ENCODE measurements at regions of chr16 and their contacts with region 1.

Region 1: DNA sequence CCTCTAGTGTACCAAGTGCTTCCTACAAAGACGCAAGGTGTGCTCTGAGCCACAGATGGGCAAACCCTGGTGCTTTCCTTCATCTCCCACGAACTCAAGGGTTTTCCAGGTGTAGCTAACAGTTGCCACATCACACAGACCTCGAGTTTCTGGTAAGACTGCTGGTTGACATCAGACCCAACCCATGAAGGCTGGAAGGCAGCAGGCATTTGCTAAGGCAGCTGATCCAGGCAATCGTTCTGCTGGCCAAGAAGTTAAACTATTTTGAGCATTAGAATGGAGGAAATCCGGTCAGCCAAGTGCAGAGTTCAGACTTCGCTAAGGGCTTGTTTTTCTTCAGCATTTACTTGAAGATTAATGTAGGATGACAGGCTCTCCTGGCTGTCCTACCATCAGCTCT is 11.5 kb downstream of the HAS3 start:
- DNase-seq: peak in 1 of 5 donors; percentile 6
- H3K4me3 ChIP-seq: no peak overlapping the region
- H3K27ac ChIP-seq: no peak overlapping the region
- H3K4me1 ChIP-seq: no peaks in the 10 kb centered on the region
- H3K27me3 ChIP-seq: no peaks in the 10 kb centered on the region
- CTCF ChIP-seq: no peak
- EP300 ChIP-seq: no peak
- POLR2A ChIP-seq: no peak

Region 2: DNA sequence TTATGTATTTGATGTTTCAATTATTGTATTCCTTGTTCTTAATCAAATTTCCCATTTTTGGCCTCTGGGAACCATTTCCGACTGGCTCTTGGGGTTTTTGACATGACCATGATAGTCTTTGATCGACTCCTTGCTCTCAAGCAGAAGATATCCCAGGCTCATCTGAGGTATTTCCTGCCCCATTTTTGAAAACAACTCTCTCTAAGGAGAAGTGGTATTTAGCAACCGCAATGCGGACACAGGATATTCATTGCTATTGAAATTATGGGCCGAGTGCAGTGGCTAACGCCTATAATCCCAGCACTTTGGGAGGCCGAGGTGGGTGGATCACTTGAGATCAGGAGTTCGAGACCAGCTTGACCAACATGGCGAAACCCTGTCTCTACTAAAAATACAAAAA is 268.1 kb before region 1 on chr16:
- intact Hi-C with region 1: loop called in 3 of 4 experiments (anchors 5 to 10 kb)
- DNase-seq: no peak
- H3K4me3 ChIP-seq: no peak overlapping the region
- H3K27ac ChIP-seq: no peak overlapping the region
- H3K4me1 ChIP-seq: peaks cover 1% of the 10 kb centered on the region
- H3K27me3 ChIP-seq: no peaks in the 10 kb centered on the region
- CTCF ChIP-seq: no peak
- EP300 ChIP-seq: no peak
- POLR2A ChIP-seq: no peak

Region 3: DNA sequence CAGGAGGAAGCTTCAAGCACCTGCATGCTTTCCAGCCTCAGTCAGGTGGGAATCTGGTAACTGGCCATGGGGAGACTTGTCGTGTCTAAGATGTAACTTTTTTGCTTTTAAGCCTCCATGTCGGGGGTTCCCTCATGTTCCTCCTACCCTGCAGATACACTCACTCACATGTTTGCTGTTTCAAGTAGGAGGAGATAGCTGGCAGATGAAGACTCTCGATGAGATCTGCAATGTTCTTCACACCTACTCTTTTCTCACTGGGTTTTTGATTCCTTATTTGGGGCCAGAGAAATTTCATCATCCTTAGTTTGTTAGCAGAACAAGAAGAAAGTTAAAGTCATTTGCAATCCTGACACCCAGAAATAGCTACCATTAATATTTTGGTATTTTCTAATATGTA is 40.3 kb after region 1 on chr16:
- intact Hi-C with region 1: no loop called
- DNase-seq: no peak
- H3K4me3 ChIP-seq: no peak overlapping the region
- H3K27ac ChIP-seq: no peak overlapping the region
- H3K4me1 ChIP-seq: no peaks in the 10 kb centered on the region
- H3K27me3 ChIP-seq: no peaks in the 10 kb centered on the region
- CTCF ChIP-seq: no peak
- EP300 ChIP-seq: no peak
- POLR2A ChIP-seq: no peak